ENCODE measurements at regions of chr14 and their contacts with region 1.

Region 1: GRCh38 chr14:104976198-104977007 is 1.8 kb downstream of the AHNAK2 start:
- DNase-seq: peak; percentile 96
- H3K4me3 ChIP-seq: peak overlapping the region in 1 of 8 donors; percentile 22
- H3K27ac ChIP-seq: no peak overlapping the region
- H3K4me1 ChIP-seq: peaks cover 9 to 55% (median 34%) of the 10 kb centered on the region in 6 donors
- H3K27me3 ChIP-seq: peaks cover 0 to 75% (median 38%) of the 10 kb centered on the region in 7 donors
- CTCF ChIP-seq: peak; percentile 88 to 98 (median 95)
- POLR2A ChIP-seq: no peak

Region 2: GRCh38 chr14:105045710-105046326 is 69.4 kb after region 1 on chr14:
- intact Hi-C with region 1: loop called (anchors 2 kb)
- DNase-seq: peak; percentile 99
- H3K4me3 ChIP-seq: peak overlapping the region in 2 of 8 donors; percentile 16 to 41
- H3K27ac ChIP-seq: peak overlapping the region in 3 of 8 donors; percentile 19 to 60 (median 35)
- H3K4me1 ChIP-seq: peaks cover 5 to 41% (median 12%) of the 10 kb centered on the region in 6 donors
- H3K27me3 ChIP-seq: peaks cover 0 to 5% (median 0%) of the 10 kb centered on the region in 7 donors
- CTCF ChIP-seq: peak; percentile 98 to 100 (median 100)
- POLR2A ChIP-seq: no peak